ENCODE measurements at regions of chr13 and their contacts with region 1.

Region 1: DNA sequence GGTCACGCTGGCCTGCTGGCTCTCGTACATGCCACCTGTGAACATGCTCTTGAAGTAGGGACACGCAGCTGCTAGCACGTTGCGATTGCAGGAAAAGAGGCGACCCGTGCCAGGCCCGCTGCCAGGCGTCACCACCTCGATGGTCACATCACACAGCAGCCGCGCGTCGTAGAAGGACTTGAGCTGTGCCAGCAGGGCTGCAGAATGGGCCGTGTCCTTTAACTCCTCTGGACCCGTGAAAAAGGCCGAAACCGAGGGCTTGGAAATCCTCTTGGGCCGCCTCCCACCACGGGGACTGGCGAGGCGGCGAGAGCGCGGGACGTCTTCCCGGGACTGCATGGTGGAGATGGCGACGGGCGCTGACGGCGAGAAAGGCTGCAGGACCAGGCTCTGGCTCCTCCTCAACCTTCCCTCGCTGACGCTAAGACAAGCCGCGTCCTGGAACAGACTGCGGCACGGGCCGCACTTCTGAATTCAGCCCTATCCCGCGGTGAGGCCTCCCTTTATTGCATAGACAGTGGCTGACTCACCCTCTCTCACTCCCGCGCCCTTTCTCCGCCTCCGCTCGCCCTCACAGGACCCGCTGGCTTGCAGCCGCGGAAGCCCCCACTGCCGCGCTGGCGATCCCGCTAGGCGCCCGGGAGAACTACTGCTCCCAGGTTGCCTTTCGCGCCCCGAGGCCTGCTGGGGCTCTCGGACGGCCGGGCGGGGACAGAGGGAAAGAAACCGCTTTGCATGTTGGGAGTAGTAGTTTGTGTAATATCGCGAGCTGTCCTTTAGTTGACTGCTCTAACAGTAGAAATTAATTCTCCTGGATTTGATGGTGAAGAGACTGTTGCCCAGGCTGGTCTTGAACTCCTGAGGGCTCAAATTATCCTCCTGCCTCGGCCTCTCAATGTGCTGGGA is at the start of gene KBTBD7:
- DNase-seq: peak; percentile 88
- H3K4me3 Mint-ChIP-seq: peak within 1 kb of the TSS; percentile 85
- H3K27ac Mint-ChIP-seq: peak within 1 kb of the TSS; percentile 91
- H3K4me1 Mint-ChIP-seq: peaks cover 40% of the 10 kb centered on the region
- H3K27me3 Mint-ChIP-seq: no peaks in the 10 kb centered on the region
- total RNA-seq, gene KBTBD7: 5.1 and 5.8 TPM in 2 replicates

Region 2: GRCh38 chr13:41263261-41264027 is 69.3 kb after region 1 on chr13 and contains the start of gene MTRF1:
- intact Hi-C with region 1: loop called (anchors 1 kb)
- DNase-seq: peak; percentile 78
- H3K4me3 Mint-ChIP-seq: peak within 1 kb of the TSS; percentile 99
- H3K27ac Mint-ChIP-seq: peak within 1 kb of the TSS; percentile 99
- H3K4me1 Mint-ChIP-seq: peaks cover 6% of the 10 kb centered on the region
- H3K27me3 Mint-ChIP-seq: no peaks in the 10 kb centered on the region
- total RNA-seq, gene MTRF1: 18.7 and 19.9 TPM in 2 replicates

Region 3: DNA sequence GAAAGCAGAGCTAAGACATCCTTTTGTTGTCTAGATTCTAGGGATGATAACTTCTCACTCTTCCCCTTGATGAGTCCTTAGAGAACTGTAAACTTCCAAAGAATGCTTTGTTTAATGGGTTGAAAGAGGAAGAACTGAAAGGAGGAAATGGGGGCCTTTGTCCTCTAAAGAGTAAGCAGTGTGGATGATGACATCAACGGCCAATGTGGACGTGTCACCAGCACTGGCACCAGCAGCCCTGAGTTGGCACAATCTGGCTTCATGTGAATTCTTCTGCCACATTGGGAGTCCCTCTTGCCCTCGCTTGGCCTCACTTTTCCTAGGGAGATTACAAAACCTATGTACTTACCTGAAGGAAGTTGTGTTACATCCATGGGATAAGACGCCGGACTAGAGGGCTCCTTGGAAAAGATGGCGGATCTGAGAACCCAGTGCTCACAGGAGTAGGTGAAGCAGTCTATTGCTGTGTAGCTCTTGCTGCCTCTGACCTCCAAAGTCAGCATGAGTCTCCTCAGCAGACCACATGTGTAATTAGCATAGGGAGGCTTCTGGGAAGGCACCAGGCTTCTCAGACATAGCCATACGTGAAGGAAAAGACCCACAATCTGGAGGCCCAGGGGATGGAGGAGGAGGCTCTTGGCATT is 326.0 kb after region 1 on chr13:
- intact Hi-C with region 1: no loop called
- DNase-seq: no peak
- H3K4me3 Mint-ChIP-seq: no peak overlapping the region
- H3K27ac Mint-ChIP-seq: no peak overlapping the region
- H3K4me1 Mint-ChIP-seq: no peaks in the 10 kb centered on the region
- H3K27me3 Mint-ChIP-seq: no peaks in the 10 kb centered on the region

Measured in activated T-helper 2 cell treated with anti-CD3 and anti-CD28 coated beads, Interferon-gamma antibody, Interleukin-2, Interleukin-4, amounts not matched to agents 10 μg/mL and 5 μg/mL and 100 μg/mL, durations not matched to agents 14 hours and 24 hours and 36 hours (primary cell).